GM12878 (cell line): ENCODE measurements at regions of chr15 and their contacts with region 1.

Region 1: DNA sequence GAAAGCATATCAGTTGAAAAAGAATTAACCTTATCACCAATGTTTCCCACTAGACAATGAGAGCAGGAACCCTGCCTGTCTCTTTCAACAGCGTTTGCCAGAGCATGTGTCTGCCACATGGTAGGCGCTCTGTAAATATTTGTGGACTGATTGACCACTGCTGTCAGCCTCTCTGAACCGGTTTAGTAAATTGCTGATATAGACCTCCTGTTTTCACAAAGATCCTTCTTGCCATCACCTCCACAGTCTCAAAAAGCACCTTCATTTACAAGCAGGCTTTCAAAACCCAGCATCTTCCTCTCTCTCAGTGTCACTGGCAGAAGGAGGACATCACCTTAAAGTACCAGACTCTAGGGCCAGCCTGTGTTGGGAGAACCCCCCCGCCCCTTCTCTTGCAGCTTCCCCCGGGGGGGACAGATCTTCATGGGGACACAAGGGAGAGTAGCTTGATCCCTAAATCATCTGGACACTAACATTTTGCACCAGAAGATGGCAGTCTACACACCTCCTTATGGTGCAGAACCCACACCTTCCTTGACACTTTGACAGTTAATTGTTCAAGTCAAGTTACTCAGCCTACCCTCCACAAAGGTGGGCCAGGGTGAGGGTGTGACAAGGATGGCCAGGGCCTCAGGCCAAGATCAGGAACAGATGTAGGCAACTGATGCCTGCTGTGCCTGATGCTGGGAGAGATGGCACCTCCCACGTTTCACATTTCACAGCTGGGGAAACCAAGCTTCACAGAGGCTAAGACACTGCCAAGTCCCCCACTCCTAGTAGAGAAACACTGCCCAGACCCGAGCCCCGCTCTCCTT is 37.8 kb upstream of the USP3 start:
- DNase-seq: no peak
- ATAC-seq: peak; percentile 96
- H3K4me3 ChIP-seq: no peak overlapping the region
- H3K27ac ChIP-seq: no peak overlapping the region
- H3K4me1 ChIP-seq: peaks cover 16% of the 10 kb centered on the region
- H3K27me3 ChIP-seq: no peaks in the 10 kb centered on the region
- CTCF ChIP-seq: peak; percentile 65 to 79 (median 70)
- EP300 ChIP-seq: no peak
- POLR2A ChIP-seq: no peak
- RAD21 ChIP-seq: peak; percentile 89

Region 2: GRCh38 chr15:63487076-63487757 is 20.6 kb after region 1 on chr15:
- CTCF ChIA-PET with region 1: interaction called, 62 read pairs
- POLR2A ChIA-PET with region 1: interaction called, 3 read pairs
- RAD21 ChIA-PET with region 1: interaction called, 84 read pairs
- SMC1A ChIA-PET with region 1: interaction called, 89 read pairs
- in situ Hi-C with region 1: no loop called
- intact Hi-C with region 1: loop called (anchors 1 kb)
- DNase-seq: no peak
- ATAC-seq: peak; percentile 74
- H3K4me3 ChIP-seq: peak overlapping the region; percentile 42; the same call in 1 of the 2 replicates
- H3K27ac ChIP-seq: peak overlapping the region; percentile 89
- H3K4me1 ChIP-seq: peaks cover 57% of the 10 kb centered on the region
- H3K27me3 ChIP-seq: no peaks in the 10 kb centered on the region
- CTCF ChIP-seq: peak; percentile 84 to 98 (median 97)
- EP300 ChIP-seq: no peak
- POLR2A ChIP-seq: no peak
- RAD21 ChIP-seq: peak; percentile 82

Region 3: DNA sequence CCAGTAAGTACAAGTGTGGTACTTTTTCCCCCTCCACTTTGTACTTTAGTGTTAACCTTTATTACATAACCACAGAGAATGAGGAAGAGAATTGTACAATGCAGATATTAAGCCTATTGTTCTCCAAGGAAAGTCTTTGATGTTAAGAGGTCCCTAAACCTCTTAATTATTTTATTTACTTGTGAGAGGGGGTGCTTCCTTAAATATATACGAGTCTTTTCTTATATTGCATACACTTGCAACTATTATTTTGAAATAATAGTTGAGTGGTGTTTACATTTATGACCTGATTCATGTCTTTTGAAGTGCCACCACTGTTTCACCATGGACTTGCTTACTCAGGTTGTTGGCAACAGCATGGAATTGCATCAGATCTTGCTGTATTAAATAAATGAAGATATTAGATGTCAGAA is 48.0 kb after region 1 on chr15:
- CTCF ChIA-PET with region 1: interaction called, 20 read pairs
- POLR2A ChIA-PET with region 1: interaction called, 3 read pairs
- RAD21 ChIA-PET with region 1: interaction called, 28 read pairs
- SMC1A ChIA-PET with region 1: interaction called, 9 read pairs
- in situ Hi-C with region 1: no loop called
- intact Hi-C with region 1: no loop called
- DNase-seq: no peak
- ATAC-seq: 0 out of 3 replicates have a peak, but pooled peaks have one; percentile 12
- H3K4me3 ChIP-seq: 0 out of 2 replicates have a peak overlapping the region, but pooled peaks have one; percentile 21
- H3K27ac ChIP-seq: peak overlapping the region; percentile 67; the same call in 1 of the 2 replicates
- H3K4me1 ChIP-seq: peaks cover 45% of the 10 kb centered on the region
- H3K27me3 ChIP-seq: no peaks in the 10 kb centered on the region
- CTCF ChIP-seq: no peak
- EP300 ChIP-seq: no peak
- POLR2A ChIP-seq: no peak
- RAD21 ChIP-seq: no peak

Region 4: DNA sequence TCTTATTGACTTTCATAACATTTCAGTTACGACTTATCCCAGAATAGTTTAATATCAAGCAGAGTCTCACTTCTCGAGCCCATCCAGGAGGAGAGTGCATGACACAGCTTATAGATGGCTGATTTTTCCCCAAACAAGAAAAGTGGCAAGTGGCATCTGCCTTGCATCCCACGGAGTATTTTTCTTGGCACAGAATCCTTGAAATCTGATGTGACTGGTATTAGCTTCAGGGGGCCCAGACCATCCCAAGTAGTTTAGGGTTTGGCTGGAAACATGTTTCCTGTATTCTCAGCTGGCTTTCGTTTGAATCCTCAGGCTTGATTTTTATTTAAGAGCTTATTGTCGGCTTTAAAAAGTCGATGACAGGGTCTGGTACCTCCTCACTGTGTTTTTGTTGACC is 109.9 kb after region 1 on chr15:
- CTCF ChIA-PET with region 1: interaction called, 7 read pairs
- POLR2A ChIA-PET with region 1: interaction called, 3 read pairs
- RAD21 ChIA-PET with region 1: no interaction called
- SMC1A ChIA-PET with region 1: interaction called, 14 read pairs
- in situ Hi-C with region 1: no loop called
- intact Hi-C with region 1: no loop called
- DNase-seq: no peak
- ATAC-seq: no peak
- H3K4me3 ChIP-seq: no peak overlapping the region
- H3K27ac ChIP-seq: no peak overlapping the region
- H3K4me1 ChIP-seq: no peaks in the 10 kb centered on the region
- H3K27me3 ChIP-seq: no peaks in the 10 kb centered on the region
- CTCF ChIP-seq: no peak
- EP300 ChIP-seq: no peak
- POLR2A ChIP-seq: no peak
- RAD21 ChIP-seq: no peak

Region 5: DNA sequence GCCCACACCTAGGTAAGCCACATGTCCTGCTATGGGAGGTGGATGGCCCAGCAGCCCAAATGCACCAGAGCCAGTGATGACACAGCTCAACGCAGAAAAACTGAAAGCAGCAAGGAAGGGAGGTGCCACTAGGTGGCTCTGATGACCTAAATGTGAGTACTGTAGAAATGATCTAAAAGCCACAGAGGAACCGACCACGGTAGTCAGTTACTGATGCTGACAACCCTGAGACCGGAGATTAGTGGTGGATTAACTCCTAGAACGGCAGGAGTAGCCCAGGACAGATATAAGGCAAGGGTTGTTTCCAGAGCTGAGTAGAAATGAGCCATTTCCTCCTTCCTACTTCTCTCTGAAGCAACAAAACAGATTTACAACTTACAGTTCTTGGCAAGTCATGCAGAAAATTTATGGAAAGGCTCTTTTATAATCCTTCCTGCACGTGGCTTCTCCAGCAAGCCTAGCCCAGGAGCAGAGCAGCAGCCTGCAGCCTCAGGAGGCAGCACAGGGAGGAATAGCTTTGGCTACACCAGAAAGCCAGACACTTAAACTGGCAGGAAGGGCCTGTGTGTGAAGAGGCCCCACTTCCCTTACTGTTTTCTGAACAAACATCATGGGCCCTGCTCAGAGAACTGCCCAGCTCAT is 143.7 kb after region 1 on chr15:
- CTCF ChIA-PET with region 1: interaction called, 17 read pairs
- POLR2A ChIA-PET with region 1: no interaction called
- RAD21 ChIA-PET with region 1: interaction called, 14 read pairs
- SMC1A ChIA-PET with region 1: interaction called, 15 read pairs
- in situ Hi-C with region 1: no loop called
- intact Hi-C with region 1: no loop called
- DNase-seq: peak; percentile 61
- ATAC-seq: peak; percentile 97
- H3K4me3 ChIP-seq: no peak overlapping the region
- H3K27ac ChIP-seq: peak overlapping the region; percentile 78
- H3K4me1 ChIP-seq: peaks cover 16% of the 10 kb centered on the region
- H3K27me3 ChIP-seq: no peaks in the 10 kb centered on the region
- CTCF ChIP-seq: peak; percentile 80 to 93 (median 89)
- EP300 ChIP-seq: no peak
- POLR2A ChIP-seq: no peak
- RAD21 ChIP-seq: peak; percentile 92